Mammary epithelial cell (primary cell): ENCODE measurements at regions of chr17 and their contacts with region 1.

Region 1: GRCh38 chr17:47621293-47622178 is 28.2 kb upstream of the KPNB1 start:
- DNase-seq: peak; percentile 88
- H3K4me3 ChIP-seq: no peak overlapping the region
- H3K27ac ChIP-seq: peak overlapping the region; percentile 56
- H3K4me1 ChIP-seq: peaks cover 27% of the 10 kb centered on the region
- H3K27me3 ChIP-seq: no peaks in the 10 kb centered on the region
- CTCF ChIP-seq: no peak

Region 2: GRCh38 chr17:47649153-47649971 is 27.8 kb after region 1 on chr17 and contains the start of gene KPNB1:
- CTCF ChIA-PET with region 1: interaction called, 4 read pairs
- dilution Hi-C with region 1: no loop called
- in situ Hi-C with region 1: no loop called
- intact Hi-C with region 1: loop called (anchors 1 kb)
- DNase-seq: peak; percentile 100
- H3K4me3 ChIP-seq: peak within 1 kb of the TSS; percentile 90 to 99 (median 91)
- H3K27ac ChIP-seq: peak within 1 kb of the TSS; percentile 85
- H3K4me1 ChIP-seq: peaks cover 31% of the 10 kb centered on the region
- H3K27me3 ChIP-seq: no peaks in the 10 kb centered on the region
- CTCF ChIP-seq: no peak
- total RNA-seq, gene KPNB1: 333 to 454 TPM

Region 3: GRCh38 chr17:47831003-47831933 is 209.7 kb after region 1 on chr17 and contains the starts of genes LRRC46 and MRPL10:
- CTCF ChIA-PET with region 1: no interaction called
- dilution Hi-C with region 1: no loop called
- in situ Hi-C with region 1: no loop called
- intact Hi-C with region 1: no loop called
- DNase-seq: peak; percentile 86
- H3K4me3 ChIP-seq: peak within 1 kb of the TSS; percentile 66 to 98 (median 77)
- H3K27ac ChIP-seq: peak within 1 kb of the TSS; percentile 65
- H3K4me1 ChIP-seq: peaks cover 20% of the 10 kb centered on the region
- H3K27me3 ChIP-seq: no peaks in the 10 kb centered on the region
- CTCF ChIP-seq: peak; percentile 51 to 53
- total RNA-seq, gene LRRC46: 0.54 TPM in 1 of 2 donors, not detected in the other
- total RNA-seq, gene MRPL10: 18.2 to 39.4 TPM

Region 4: GRCh38 chr17:47850692-47851573 is 229.4 kb after region 1 on chr17 and contains the start of gene SP6:
- CTCF ChIA-PET with region 1: no interaction called
- dilution Hi-C with region 1: no loop called
- in situ Hi-C with region 1: no loop called
- intact Hi-C with region 1: no loop called
- DNase-seq: peak; percentile 92
- H3K4me3 ChIP-seq: peak within 1 kb of the TSS; percentile 66 to 89 (median 70)
- H3K27ac ChIP-seq: peak within 1 kb of the TSS; percentile 64
- H3K4me1 ChIP-seq: peaks cover 34% of the 10 kb centered on the region
- H3K27me3 ChIP-seq: peaks cover 3% of the 10 kb centered on the region
- CTCF ChIP-seq: peak in 1 of 2 donors; percentile 45
- total RNA-seq, gene SP6: 4.2 to 15.1 TPM